ENCODE measurements at regions of chr7 and their contacts with region 1.

Region 1: GRCh38 chr7:97027427-97028234 is 3.0 kb upstream of the DLX5 start:
- H3K4me3 Mint-ChIP-seq: peak overlapping the region; percentile 57
- H3K27ac Mint-ChIP-seq: no peak overlapping the region
- H3K4me1 Mint-ChIP-seq: peaks cover 41% of the 10 kb centered on the region
- H3K27me3 Mint-ChIP-seq: peaks cover 71% of the 10 kb centered on the region

Region 2: GRCh38 chr7:95916573-95917297 is 1110.9 kb before region 1 on chr7:
- intact Hi-C with region 1: loop called (anchors 1 kb)
- H3K4me3 Mint-ChIP-seq: no peak overlapping the region
- H3K27ac Mint-ChIP-seq: no peak overlapping the region
- H3K4me1 Mint-ChIP-seq: peaks cover 5% of the 10 kb centered on the region
- H3K27me3 Mint-ChIP-seq: peaks cover 10% of the 10 kb centered on the region

Region 3: GRCh38 chr7:96075510-96076349 is 951.9 kb before region 1 on chr7:
- intact Hi-C with region 1: loop called (anchors 1 kb)
- H3K4me3 Mint-ChIP-seq: peak overlapping the region; percentile 39
- H3K27ac Mint-ChIP-seq: no peak overlapping the region
- H3K4me1 Mint-ChIP-seq: peaks cover 8% of the 10 kb centered on the region
- H3K27me3 Mint-ChIP-seq: peaks cover 31% of the 10 kb centered on the region

Region 4: GRCh38 chr7:96321658-96322372 is 705.8 kb before region 1 on chr7 and contains the start of gene SLC25A13:
- intact Hi-C with region 1: loop called (anchors 5 kb)
- H3K4me3 Mint-ChIP-seq: peak within 1 kb of the TSS; percentile 89
- H3K27ac Mint-ChIP-seq: peak within 1 kb of the TSS; percentile 96
- H3K4me1 Mint-ChIP-seq: peaks cover 36% of the 10 kb centered on the region
- H3K27me3 Mint-ChIP-seq: no peaks in the 10 kb centered on the region

Region 5: DNA sequence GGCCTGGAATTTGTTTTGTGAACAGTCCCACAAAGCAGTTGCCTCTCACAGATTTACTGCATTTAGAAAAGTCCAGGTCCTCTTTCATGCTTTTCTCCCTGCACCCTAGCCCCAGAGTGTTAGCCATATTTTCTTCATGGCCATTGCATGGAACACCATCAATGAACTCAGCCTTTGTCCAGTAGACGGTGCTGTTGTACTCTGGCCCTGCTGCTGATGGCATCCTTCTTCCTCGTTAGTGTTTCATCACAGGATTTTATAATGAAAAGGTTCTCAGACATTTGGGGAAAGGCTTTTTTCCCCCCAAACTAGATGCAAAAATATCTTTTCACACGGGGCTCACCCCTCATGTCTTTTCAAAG is 612.7 kb before region 1 on chr7:
- intact Hi-C with region 1: loop called (anchors 2 kb)
- H3K4me3 Mint-ChIP-seq: no peak overlapping the region
- H3K27ac Mint-ChIP-seq: no peak overlapping the region
- H3K4me1 Mint-ChIP-seq: no peaks in the 10 kb centered on the region
- H3K27me3 Mint-ChIP-seq: peaks cover 1% of the 10 kb centered on the region

Region 6: DNA sequence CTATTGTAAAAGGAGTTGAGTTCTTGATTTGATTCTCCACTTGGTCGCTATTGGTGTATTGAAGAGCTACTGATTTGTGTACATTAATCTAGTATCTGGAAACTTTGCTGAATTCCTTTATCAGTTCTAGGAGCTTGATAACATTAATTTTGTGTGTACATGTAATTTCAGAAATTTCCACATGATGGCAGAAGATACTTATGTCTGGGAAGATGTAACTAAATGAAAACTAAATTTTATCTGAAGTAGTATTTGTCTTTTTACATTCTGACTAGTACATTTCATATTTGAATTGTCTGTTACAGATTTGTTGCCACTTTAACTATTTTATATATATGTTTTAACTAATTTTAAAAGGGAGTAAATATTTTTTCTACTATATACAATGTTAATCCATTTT is 117.4 kb after region 1 on chr7:
- intact Hi-C with region 1: no loop called
- H3K4me3 Mint-ChIP-seq: no peak overlapping the region
- H3K27ac Mint-ChIP-seq: no peak overlapping the region
- H3K4me1 Mint-ChIP-seq: no peaks in the 10 kb centered on the region
- H3K27me3 Mint-ChIP-seq: no peaks in the 10 kb centered on the region